ENCODE measurements at regions of chr1 and their contacts with region 1.

Region 1: GRCh38 chr1:168603501-168604110 is 27.2 kb downstream of the XCL1 start:
- DNase-seq: peak; percentile 32 to 81
- H3K4me3 ChIP-seq: no peak overlapping the region
- H3K4me1 ChIP-seq: no peaks in the 10 kb centered on the region
- H3K27me3 ChIP-seq: peaks cover 3% of the 10 kb centered on the region; the same call in 1 of the 2 replicates

Region 2: DNA sequence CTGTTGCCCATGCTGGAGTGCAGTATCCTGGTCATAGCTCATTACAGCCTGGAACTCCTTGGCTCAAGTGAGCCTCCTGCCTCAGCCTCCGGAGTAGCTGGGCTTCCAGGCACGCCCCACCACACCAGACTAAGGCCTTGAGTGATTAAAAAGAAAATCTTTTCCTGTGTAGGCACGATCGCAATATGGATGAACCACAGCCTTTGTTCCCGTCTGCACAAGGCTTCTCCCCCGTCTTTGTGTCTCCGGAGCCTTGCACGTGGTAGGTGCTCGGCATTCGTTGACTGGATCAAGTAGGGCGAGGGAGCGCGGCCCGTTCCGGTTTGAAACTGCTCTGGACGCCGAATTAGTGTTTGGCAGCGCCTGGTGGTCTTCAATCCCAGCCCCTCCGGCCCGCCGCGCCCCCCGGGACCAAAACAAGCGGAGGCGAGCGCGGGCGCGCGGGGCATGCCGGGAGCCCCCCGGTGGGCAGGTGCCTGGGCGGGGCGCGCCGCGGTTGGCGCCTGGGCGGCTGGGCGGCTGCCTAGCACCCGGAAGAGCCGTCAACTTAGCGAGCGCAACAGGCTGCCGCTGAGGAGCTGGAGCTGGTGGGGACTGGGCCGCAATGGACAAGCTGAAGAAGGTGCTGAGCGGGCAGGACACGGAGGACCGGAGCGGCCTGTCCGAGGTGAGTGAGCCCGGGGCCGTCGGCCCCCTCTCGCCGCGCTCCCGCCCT is 378.0 kb before region 1 on chr1 and contains the start of gene SFT2D2:
- in situ Hi-C with region 1: no loop called
- DNase-seq: peak; percentile 75 to 83
- H3K4me3 ChIP-seq: peak within 1 kb of the TSS; percentile 86
- H3K4me1 ChIP-seq: peaks cover 13% of the 10 kb centered on the region
- H3K27me3 ChIP-seq: no peaks in the 10 kb centered on the region

Region 3: GRCh38 chr1:169348383-169349036 is 744.9 kb after region 1 on chr1:
- in situ Hi-C with region 1: loop called (anchors 25 kb)
- DNase-seq: peak; percentile 39 to 45
- H3K4me3 ChIP-seq: no peak overlapping the region
- H3K4me1 ChIP-seq: no peaks in the 10 kb centered on the region
- H3K27me3 ChIP-seq: no peaks in the 10 kb centered on the region

Region 4: DNA sequence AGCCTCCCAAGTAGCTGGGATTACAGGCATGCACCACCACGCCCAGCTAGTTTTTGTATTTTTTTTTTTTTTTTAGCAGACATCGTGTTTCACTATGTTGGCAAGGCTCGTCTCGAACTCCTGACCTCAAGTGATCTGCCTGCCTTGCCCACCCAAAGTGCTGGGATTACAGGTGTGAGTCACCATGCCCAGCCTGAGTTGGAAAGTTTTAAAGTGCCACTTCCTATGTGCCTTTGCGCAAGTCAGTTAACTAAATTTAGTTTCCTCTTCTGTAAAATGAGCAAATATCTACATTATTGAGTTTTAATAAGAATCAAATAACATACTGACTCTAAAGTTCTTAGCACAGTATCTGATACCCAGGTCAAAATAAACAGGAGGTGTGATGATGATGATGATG is 869.7 kb after region 1 on chr1:
- in situ Hi-C with region 1: no loop called
- DNase-seq: no peak
- H3K4me3 ChIP-seq: no peak overlapping the region
- H3K4me1 ChIP-seq: peaks cover 11% of the 10 kb centered on the region
- H3K27me3 ChIP-seq: no peaks in the 10 kb centered on the region